Gastrocnemius medialis (tissue), 4 donors: ENCODE measurements at regions of chr12 and their contacts with region 1.

Region 1: GRCh38 chr12:80195074-80195726 is 95.9 kb downstream of the OTOGL start:
- DNase-seq: no peak
- ATAC-seq: no peak
- H3K4me3 ChIP-seq: no peak overlapping the region
- H3K27ac ChIP-seq: no peak overlapping the region
- H3K4me1 ChIP-seq: peaks cover 0 to 9% of the 10 kb centered on the region in 2 donors
- H3K27me3 ChIP-seq: no peaks in the 10 kb centered on the region
- CTCF ChIP-seq: peak in 3 of 5 experiments; percentile 17 to 50 (median 19)
- POLR2A ChIP-seq: no peak

Region 2: DNA sequence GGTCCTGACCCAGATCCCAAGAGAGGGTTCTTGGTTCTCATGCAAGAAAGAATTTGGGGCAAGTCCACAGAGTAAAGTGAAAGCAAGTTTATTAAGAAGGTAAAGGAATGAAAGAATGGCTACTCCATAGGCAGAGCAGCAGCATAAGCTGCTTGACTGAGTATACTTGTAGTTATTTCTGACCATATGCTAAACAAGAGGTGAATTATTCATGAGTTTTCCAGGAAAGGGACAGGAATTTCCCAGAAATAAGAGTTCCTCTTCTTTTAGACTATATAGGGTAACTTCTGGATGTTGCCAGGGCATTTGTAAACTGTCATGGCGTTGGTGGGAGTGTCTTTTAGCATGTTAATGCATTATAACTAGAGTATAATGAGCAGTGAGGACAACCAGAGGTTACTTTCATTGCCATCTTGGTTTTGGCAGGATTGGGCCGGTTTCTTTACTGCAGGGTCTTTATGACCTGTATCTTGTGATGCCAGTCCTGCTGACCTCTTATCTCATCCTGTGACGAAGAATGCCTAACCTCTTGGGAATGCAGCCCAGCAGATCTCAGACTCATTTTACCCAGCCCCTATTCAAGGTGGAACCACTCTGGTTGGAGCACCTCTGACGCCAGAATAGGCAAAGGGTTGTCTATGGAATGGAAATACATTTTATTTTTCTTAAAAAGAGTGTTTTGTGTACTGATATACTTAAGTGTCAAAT is 17.9 kb after region 1 on chr12:
- in situ Hi-C with region 1: no loop called
- intact Hi-C with region 1: no loop called
- DNase-seq: no peak
- ATAC-seq: no peak
- H3K4me3 ChIP-seq: no peak overlapping the region
- H3K27ac ChIP-seq: no peak overlapping the region
- H3K4me1 ChIP-seq: no peaks in the 10 kb centered on the region
- H3K27me3 ChIP-seq: no peaks in the 10 kb centered on the region
- CTCF ChIP-seq: no peak
- POLR2A ChIP-seq: no peak

Region 3: GRCh38 chr12:80269803-80270552 is 74.8 kb after region 1 on chr12:
- in situ Hi-C with region 1: loop called in 1 of 4 experiments (anchors 10 kb)
- intact Hi-C with region 1: loop called (anchors 1 kb)
- DNase-seq: no peak
- ATAC-seq: no peak
- H3K4me3 ChIP-seq: no peak overlapping the region
- H3K27ac ChIP-seq: no peak overlapping the region
- H3K4me1 ChIP-seq: no peaks in the 10 kb centered on the region
- H3K27me3 ChIP-seq: no peaks in the 10 kb centered on the region
- CTCF ChIP-seq: peak; percentile 41 to 65 (median 54)
- POLR2A ChIP-seq: no peak